ENCODE measurements at regions of chr7 and their contacts with region 1.

Region 1: DNA sequence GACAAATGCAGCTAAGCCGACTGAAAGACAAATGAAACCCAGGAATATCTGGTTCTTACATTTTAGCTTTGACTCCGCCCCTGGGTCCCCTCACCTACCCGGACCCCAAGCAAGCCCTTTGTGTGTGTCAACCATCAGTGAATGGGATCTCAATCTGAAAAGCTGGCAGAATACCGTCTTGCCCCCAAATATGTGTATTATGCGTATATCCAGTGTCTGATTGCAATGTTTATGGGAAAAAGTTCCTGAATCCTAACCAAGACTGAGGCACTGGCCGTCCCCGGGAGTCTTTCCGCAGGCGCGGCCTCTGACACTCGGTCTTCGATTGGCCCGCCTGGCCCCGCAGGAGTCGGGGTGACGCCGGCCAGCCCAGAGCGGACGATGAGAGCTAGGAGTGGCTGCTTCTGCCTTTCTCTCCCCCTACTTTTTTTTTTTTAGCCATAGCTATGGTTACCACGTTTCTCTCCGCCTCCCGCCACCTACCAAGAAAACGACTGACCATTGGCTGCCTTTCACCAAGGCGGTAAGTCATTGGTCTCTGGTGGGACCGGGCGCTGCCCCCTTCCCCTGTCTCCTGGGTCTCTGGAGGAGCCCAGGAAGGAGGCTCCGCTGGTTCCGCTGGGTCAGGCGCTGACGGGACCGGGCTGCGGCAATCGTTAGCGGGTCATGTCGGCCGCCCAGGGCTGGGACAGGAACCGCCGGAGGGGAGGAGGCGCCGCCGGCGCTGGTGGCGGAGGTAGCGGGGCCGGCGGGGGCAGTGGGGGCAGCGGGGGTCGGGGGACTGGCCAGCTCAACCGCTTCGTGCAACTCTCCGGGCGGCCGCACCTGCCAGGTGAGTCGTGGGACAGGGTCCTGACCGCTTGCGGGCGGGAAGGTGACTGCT is at the start of gene KLHDC10:
- DNase-seq: peak; percentile 97
- ATAC-seq: peak; percentile 99 to 100
- total RNA-seq, gene KLHDC10: 23.8 to 28.5 TPM

Region 2: DNA sequence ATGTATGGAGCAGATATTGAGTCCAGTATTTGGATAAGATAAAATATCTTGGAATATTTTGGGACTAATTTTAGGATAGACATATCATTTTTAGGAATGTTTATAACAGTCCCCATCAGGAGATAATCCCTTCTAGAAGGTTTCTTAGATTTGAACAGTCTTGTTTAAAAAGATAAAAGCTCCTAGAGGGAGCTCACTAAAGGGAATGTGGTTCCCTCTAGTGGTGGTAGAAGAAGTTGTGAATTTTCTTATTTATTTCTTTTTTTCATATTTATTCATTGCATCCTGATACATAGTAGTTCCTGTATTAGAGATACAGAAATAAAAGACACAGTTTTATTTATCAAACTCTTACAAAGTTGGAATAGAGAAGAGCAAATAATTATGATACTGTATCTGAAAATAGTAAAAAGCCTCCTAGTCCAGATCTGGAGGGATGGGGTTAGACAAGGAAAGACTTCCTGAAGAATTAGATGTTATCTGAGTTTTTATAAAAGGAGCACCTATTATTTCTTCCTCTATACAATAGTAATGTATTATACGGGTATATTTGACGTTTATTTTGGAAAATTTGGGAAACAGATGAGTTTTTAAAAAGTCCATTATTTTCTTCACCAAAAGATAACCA is 688.3 kb after region 1 on chr7:
- intact Hi-C with region 1: loop called in 1 of 2 experiments (anchors 10 kb)
- DNase-seq: no peak
- ATAC-seq: no peak

Region 3: GRCh38 chr7:130831817-130832481 is 761.7 kb after region 1 on chr7:
- intact Hi-C with region 1: loop called in 1 of 2 experiments (anchors 5 kb)
- DNase-seq: no peak
- ATAC-seq: no peak